Vagina (tissue), 2 donors: ENCODE measurements at regions of chr22 and their contacts with region 1.

Region 1: GRCh38 chr22:25120093-25120561 is 79.5 kb upstream of the CRYBB3 start:
- DNase-seq: no peak
- H3K4me3 ChIP-seq: no peak overlapping the region
- H3K27ac ChIP-seq: peak overlapping the region; percentile 59
- H3K4me1 ChIP-seq: peaks cover 33% of the 10 kb centered on the region
- H3K27me3 ChIP-seq: no peaks in the 10 kb centered on the region
- CTCF ChIP-seq: no peak
- POLR2A ChIP-seq: no peak

Region 2: GRCh38 chr22:24341627-24342026 is 778.5 kb before region 1 on chr22:
- intact Hi-C with region 1: loop called (anchors 10 kb)
- DNase-seq: no peak
- H3K4me3 ChIP-seq: no peak overlapping the region
- H3K27ac ChIP-seq: no peak overlapping the region
- H3K4me1 ChIP-seq: no peaks in the 10 kb centered on the region
- H3K27me3 ChIP-seq: no peaks in the 10 kb centered on the region
- CTCF ChIP-seq: no peak
- POLR2A ChIP-seq: no peak